GM13977 (cell line): ENCODE measurements at regions of chr20 and their contacts with region 1.

Region 1: GRCh38 chr20:53413186-53413631 is 180.4 kb downstream of the ZNF217 start:
- DNase-seq: peak; percentile 82
- CTCF ChIP-seq: peak; percentile 93

Region 2: GRCh38 chr20:53245574-53245973 is 167.6 kb before region 1 on chr20:
- in situ Hi-C with region 1: no loop called
- DNase-seq: no peak
- CTCF ChIP-seq: no peak

Region 3: DNA sequence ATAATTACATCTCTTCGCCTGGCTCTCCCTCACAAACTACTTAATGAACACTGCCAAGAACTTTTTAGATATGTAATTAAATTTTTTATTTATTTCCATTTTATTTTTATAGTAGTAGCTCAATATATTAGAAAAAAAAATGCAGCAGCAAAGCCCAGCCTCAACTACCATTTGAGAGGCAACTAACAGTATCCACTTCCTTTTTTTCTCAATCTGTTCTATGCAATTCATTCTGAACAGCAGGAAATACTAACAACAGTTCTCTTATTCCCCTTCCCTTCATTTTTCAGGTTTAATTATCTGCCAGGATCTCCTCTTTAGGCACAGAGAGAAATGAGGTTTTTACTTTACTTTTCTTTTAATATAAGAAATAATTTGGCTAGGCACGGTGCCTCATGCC is 67.7 kb after region 1 on chr20:
- in situ Hi-C with region 1: no loop called
- DNase-seq: no peak
- CTCF ChIP-seq: no peak

Region 4: GRCh38 chr20:53547664-53548239 is 134.5 kb after region 1 on chr20:
- in situ Hi-C with region 1: loop called (anchors 10 kb)
- DNase-seq: peak; percentile 73
- CTCF ChIP-seq: peak; percentile 58

Region 5: GRCh38 chr20:53805895-53806384 is 392.7 kb after region 1 on chr20:
- in situ Hi-C with region 1: loop called (anchors 25 kb)
- DNase-seq: no peak
- CTCF ChIP-seq: no peak